ENCODE measurements at regions of chr1 and their contacts with region 1.

Region 1: GRCh38 chr1:45011837-45012638 is at the start of gene UROD:
- DNase-seq: peak; percentile 96 to 98 (median 98)
- H3K4me3 ChIP-seq: peak within 1 kb of the TSS; percentile 74 to 95 (median 84)
- H3K27ac ChIP-seq: peak within 1 kb of the TSS; percentile 81 to 90
- H3K4me1 ChIP-seq: peaks cover 16 to 70% (median 51%) of the 10 kb centered on the region in 4 experiments
- H3K27me3 ChIP-seq: no peaks in the 10 kb centered on the region

Region 2: DNA sequence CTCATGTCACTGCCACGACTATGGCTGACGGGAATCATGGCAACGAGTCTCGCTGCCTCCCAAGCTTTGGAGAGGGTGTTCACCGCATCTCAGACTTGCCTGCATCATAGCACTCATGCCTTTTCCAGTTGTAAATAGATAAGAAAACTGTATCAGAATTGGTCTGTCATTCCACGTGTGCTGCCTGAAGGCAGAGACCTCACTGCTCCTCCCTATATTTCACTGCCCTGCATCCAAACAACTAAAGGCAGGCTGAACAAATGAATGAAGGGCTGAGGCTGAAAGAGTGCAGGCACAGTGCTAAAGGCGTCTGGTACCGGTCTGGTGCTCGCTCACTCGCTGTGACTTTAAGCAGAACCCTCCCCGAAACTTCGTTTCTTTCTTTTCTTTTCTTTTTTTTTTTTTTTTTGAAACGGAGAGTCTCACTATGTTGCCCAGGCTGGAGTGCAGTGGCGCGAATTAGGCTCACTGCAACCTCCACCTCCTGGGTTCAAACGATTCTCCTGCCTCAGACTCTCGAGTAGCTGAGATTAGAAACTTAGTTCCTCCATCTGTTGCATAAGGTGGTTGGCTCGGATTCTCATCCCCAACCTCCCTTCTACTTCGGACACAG is 26.2 kb before region 1 on chr1:
- CTCF ChIA-PET with region 1: interaction called, 15 read pairs
- POLR2A ChIA-PET with region 1: interaction called, 3 read pairs
- DNase-seq: peak in 2 of 3 donors; percentile 17 to 23
- H3K4me3 ChIP-seq: peak overlapping the region; percentile 50 to 92 (median 74)
- H3K27ac ChIP-seq: peak overlapping the region in 1 of 2 experiments; percentile 78
- H3K4me1 ChIP-seq: peaks cover 6 to 18% (median 15%) of the 10 kb centered on the region in 4 experiments
- H3K27me3 ChIP-seq: no peaks in the 10 kb centered on the region

Region 3: DNA sequence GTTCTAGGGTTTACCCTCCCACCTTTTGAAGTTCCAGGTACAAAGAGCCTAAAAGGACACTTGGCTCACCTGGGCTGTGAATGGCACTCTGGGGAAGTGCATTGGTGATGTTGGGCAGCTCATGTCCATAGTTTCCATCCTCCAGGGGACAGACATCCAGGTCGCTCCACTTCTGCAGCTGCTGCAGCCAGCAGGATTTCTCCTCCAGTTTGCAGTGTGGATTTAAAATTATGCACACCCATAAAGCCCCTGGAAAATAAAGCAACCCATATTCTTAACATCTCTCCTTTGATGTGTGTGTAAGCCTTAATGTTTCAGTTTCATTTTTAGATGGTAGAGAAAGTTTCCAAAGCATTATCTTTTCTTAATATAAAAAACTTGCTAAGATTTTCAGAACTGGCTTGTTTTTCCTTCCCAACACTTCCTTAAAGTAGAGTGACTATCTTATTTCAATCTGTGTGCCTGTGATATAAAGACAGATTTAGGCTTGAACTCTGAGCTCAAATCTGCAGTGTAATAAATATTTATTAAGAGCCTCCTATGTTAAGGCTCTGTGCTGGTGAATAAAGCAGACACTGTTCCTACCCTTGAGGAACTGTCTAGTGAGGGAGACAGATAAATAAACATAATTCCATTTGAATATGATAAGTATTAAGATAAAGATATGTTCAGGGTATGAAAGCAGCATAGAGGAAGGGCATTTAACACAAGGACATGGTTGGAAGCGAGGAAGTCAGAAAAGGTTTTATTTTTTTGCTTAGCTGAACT is 39.2 kb after region 1 on chr1:
- CTCF ChIA-PET with region 1: no interaction called
- POLR2A ChIA-PET with region 1: no interaction called
- DNase-seq: peak in 1 of 3 donors; percentile 5
- H3K4me3 ChIP-seq: peak overlapping the region in 3 of 7 experiments; percentile 12 to 51 (median 15)
- H3K27ac ChIP-seq: peak overlapping the region in 1 of 2 experiments; percentile 57
- H3K4me1 ChIP-seq: peaks cover 0 to 10% (median 5%) of the 10 kb centered on the region in 4 experiments
- H3K27me3 ChIP-seq: no peaks in the 10 kb centered on the region

Region 4: DNA sequence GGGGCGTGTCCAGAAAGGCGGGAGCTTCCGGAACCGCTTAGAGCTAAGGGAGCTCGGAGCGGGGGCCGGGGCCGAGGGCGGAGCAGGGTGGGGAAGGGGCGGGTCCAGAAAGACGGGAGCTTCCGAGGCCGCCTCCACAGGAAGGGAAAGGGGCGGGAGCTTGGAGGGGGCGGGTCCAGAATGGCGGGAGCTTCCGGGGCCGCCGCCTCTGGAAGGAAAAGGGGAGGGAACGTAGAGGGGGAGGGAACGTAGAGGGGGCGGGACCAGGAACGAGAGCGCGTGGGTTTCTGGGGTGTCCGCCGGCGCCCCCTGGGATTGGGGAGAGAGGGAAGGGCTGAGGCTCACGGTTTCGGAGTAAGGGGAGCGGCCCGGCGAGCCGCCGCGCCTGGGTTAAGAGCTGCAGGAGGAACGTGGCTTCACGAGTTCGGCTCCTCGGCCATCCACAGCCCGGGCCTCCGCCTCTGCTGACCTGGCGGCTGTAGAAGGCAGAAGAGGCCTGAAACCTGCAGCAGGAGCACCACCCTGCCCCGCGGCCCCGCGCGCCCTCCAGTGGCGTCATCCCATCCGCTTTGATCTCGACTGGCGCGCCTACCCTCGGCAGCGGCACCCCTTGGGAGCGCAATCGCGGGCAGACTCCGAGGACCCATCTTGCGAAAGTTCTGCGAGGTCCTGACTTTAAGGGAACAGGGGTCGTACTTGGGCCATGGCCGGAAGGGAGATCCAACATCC is 291.7 kb after region 1 on chr1:
- CTCF ChIA-PET with region 1: interaction called, 402 read pairs
- POLR2A ChIA-PET with region 1: interaction called, 4 read pairs
- DNase-seq: peak; percentile 97 to 99 (median 98)
- H3K4me3 ChIP-seq: peak overlapping the region; percentile 53 to 90 (median 72)
- H3K27ac ChIP-seq: peak overlapping the region; percentile 69 to 88
- H3K4me1 ChIP-seq: peaks cover 2 to 24% (median 20%) of the 10 kb centered on the region in 4 experiments
- H3K27me3 ChIP-seq: no peaks in the 10 kb centered on the region

Region 5: DNA sequence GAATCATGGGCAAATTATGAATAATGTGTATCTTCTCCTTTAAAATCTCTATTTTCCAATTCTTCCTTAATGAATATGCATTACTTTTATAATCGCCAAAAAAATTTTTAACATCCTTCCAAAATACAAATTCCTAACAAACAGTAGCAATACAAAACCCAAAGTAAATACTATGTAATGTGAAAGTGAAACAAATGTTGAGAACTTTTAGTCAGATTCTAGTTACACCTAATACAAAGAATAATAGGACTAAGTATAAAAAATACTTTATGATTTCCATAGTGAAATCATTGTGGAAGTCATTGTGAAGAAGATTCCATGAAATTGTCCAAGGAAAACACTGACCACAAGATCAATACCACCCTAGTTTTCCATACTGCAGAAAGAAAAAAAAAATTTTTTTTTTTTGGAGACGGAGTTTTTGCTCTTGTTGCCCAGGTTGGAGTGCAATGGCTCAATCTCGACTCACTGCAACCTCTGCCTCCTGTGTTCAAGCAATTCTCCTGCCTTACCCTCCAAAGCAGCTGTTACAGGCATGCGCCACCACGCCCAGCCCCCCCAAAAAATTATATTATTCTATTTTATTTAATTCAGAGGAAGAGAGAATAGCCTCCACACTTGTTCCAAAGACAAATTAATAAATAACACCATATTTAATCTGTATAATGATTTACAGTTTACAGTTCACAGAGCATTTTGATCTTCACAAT is 467.2 kb after region 1 on chr1:
- CTCF ChIA-PET with region 1: no interaction called
- POLR2A ChIA-PET with region 1: no interaction called
- DNase-seq: no peak
- H3K4me3 ChIP-seq: no peak overlapping the region
- H3K27ac ChIP-seq: no peak overlapping the region
- H3K4me1 ChIP-seq: peaks cover 0 to 2% (median under 1%) of the 10 kb centered on the region in 4 experiments
- H3K27me3 ChIP-seq: no peaks in the 10 kb centered on the region